OCI-LY7 (cell line): ENCODE measurements at regions of chr14 and their contacts with region 1.

Region 1: GRCh38 chr14:64338616-64339316 is 44.6 kb upstream of the ESR2 start:
- DNase-seq: peak; percentile 98
- H3K4me3 ChIP-seq: peak overlapping the region; percentile 80
- H3K27ac ChIP-seq: peak overlapping the region; percentile 76
- H3K4me1 ChIP-seq: peaks cover 21% of the 10 kb centered on the region
- CTCF ChIP-seq: no peak

Region 2: DNA sequence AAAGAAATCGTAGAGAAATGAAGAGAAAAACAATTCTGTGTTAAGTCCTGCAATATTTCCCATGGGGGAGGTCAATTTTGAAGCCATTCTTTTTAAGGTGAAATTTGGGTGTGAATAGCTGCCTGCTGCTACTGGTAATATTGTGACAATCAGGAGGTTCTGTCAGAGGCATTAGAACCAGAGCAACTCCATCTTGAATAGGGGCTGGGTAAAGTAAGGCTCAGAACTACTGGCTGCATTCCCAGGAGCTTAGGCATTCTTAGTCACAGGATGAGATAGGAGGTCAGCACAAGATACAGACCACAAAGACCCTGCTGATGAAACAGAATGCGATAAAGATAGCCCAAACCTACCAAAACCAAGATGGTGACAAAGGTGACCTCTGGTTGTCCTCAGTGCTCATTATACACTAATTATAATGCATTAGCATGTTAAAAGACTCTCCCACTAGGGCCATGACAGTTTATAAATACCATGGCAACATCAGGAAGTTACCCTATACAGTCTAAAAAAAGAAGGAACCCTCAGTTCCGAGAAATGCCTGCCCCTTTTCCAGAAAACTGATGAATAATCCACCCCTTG is 24.6 kb after region 1 on chr14:
- CTCF ChIA-PET with region 1: no interaction called
- POLR2A ChIA-PET with region 1: no interaction called
- intact Hi-C with region 1: no loop called
- DNase-seq: no peak
- H3K4me3 ChIP-seq: no peak overlapping the region
- H3K27ac ChIP-seq: no peak overlapping the region
- H3K4me1 ChIP-seq: no peaks in the 10 kb centered on the region
- CTCF ChIP-seq: no peak

Region 3: DNA sequence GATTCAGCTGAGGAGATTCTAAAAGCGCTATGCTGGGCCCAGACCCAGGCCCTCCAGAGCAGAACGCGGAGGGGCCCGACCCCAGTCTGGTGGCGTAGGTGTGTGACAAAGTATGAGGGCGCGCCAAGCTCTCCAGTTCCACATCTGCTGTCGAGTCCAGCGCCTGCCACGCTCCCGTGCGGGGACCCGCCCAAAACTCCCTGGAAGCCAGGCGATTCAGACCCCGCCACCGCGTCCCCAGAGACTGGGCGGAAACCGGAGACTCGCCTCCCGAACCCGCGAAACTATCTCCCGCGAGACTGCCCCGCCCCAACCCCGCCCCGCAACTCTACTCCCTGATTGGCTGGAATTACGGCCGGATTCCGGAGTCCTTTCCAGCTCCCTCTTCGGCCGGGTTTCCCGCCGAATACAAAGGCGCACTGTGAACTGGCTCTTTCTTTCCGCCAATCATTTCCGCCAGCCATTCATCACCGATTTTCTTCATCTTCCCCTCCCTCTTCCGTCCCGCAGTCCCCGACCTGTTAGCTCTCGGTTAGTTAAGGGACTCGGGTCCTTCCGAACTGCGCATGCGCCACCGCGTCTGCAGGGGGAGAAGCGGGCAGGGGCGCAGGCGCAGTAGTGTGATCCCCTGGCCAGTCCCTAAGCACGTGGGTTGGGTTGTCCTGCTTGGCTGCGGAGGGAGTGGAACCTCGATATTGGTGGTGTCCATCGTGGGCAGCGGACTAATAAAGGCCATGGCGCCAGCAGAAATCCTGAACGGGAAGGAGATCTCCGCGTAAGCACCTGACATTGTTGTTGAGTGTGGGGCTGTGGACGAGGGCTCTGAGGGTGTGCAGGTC is 49.1 kb after region 1 on chr14 and contains the start of gene MTHFD1:
- CTCF ChIA-PET with region 1: no interaction called
- POLR2A ChIA-PET with region 1: interaction called, 18 read pairs
- intact Hi-C with region 1: loop called (anchors 1 kb)
- DNase-seq: peak; percentile 98
- H3K4me3 ChIP-seq: peak within 1 kb of the TSS; percentile 85
- H3K27ac ChIP-seq: peak within 1 kb of the TSS; percentile 78
- H3K4me1 ChIP-seq: peaks cover 26% of the 10 kb centered on the region
- CTCF ChIP-seq: no peak
- total RNA-seq, gene MTHFD1: 73.7 and 100 TPM in 2 replicates

Region 4: DNA sequence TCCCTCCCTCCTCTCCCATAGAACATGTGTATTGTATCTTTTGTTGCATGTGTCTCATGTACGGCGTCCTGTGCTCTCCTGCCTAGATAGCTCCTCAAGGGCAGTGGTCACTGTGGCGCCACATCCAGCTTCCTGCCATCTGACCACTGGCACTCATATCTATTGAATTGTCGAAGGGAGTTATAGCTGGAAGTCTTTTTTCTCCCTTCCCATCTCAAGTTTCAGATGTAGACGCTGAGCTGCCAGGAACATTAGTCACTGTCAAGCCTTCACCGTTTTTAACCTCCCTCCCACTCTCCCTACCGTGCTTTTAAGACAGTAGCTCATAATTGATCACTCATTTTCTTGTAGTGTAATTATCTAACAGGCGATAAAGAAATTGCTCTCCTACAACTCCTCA is 82.4 kb after region 1 on chr14:
- CTCF ChIA-PET with region 1: no interaction called
- POLR2A ChIA-PET with region 1: no interaction called
- intact Hi-C with region 1: loop called (anchors 10 kb)
- DNase-seq: no peak
- H3K4me3 ChIP-seq: no peak overlapping the region
- H3K27ac ChIP-seq: no peak overlapping the region
- H3K4me1 ChIP-seq: no peaks in the 10 kb centered on the region
- CTCF ChIP-seq: no peak

Region 5: GRCh38 chr14:64465191-64465822 is 126.5 kb after region 1 on chr14 and contains the start of gene AKAP5:
- CTCF ChIA-PET with region 1: no interaction called
- POLR2A ChIA-PET with region 1: no interaction called
- intact Hi-C with region 1: loop called (anchors 1 kb)
- DNase-seq: peak; percentile 60
- H3K4me3 ChIP-seq: peak within 1 kb of the TSS; percentile 60
- H3K27ac ChIP-seq: no peak within 1 kb of the TSS
- H3K4me1 ChIP-seq: peaks cover 44% of the 10 kb centered on the region
- CTCF ChIP-seq: no peak
- total RNA-seq, gene AKAP5: 0.31 and 0.92 TPM in 2 replicates

Region 6: DNA sequence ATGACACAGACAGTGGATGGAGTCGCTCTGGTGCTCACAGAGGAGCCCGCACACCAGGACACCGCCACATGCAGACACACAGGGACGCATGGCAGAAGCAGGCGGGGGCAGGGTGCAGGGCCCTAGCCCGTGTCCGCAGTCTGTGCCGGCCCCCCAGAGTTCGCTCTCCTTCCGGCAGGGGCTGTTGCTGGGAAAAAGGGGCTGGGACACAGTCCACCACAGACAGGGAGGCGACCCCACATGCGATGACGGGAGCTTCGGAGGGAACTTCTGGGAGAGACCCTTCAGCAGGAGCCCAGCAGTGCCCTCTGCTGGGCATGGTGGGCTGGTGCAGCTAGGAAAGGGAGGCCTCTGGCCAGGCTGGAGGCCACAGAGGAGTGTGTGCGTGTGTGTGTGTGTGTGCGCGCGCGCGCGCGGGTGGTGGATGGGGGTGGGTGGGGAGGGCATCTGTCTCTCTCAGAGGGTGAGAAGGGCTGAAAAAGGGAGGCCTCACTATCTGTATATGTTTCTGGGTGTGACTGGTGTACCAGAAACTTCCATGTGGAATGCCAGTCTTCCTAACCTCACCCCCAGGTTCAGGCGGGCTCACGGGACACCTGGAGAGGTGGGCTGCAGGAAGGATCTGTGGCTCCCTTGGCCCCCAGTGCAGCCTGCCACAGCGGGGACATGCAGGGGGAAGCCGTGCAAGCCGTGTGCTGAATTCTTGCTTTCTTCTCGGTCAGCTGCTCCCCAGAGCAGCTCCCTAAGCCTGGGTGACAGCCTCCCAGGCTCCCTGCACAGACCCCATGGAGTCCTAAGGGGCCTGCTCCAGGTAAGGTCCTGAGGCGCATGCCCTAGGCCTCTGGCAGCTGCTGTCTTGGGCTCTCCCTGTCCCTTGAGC is 426.1 kb after region 1 on chr14:
- CTCF ChIA-PET with region 1: no interaction called
- POLR2A ChIA-PET with region 1: no interaction called
- intact Hi-C with region 1: loop called (anchors 5 kb)
- DNase-seq: peak; percentile 56
- H3K4me3 ChIP-seq: no peak overlapping the region
- H3K27ac ChIP-seq: no peak overlapping the region
- H3K4me1 ChIP-seq: no peaks in the 10 kb centered on the region
- CTCF ChIP-seq: peak; percentile 75